Caco-2 (cell line): ENCODE measurements at regions of chr16 and their contacts with region 1.

Region 1: GRCh38 chr16:84144859-84145639 is at the starts of genes DNAAF1 and HSDL1:
- DNase-seq: peak; percentile 89 to 98
- H3K4me3 ChIP-seq: peak within 1 kb of the TSS; percentile 64
- H3K4me3 Mint-ChIP-seq: peak within 1 kb of the TSS; percentile 93
- H3K27ac Mint-ChIP-seq: peak within 1 kb of the TSS; percentile 88
- H3K4me1 ChIP-seq: no peaks in the 10 kb centered on the region
- H3K4me1 Mint-ChIP-seq: peaks cover 15% of the 10 kb centered on the region
- H3K27me3 ChIP-seq: no peaks in the 10 kb centered on the region
- H3K27me3 Mint-ChIP-seq: peaks cover 10% of the 10 kb centered on the region
- CTCF ChIP-seq: peak; percentile 58 to 70
- total RNA-seq, gene DNAAF1: 0.07 TPM in 1 of 2 replicates, not detected in the other
- total RNA-seq, gene HSDL1: 21.0 and 23.7 TPM in 2 replicates

Region 2: GRCh38 chr16:84084570-84085270 is 60.3 kb before region 1 on chr16:
- CTCF ChIA-PET with region 1: interaction called, 5 read pairs
- POLR2A ChIA-PET with region 1: no interaction called
- intact Hi-C with region 1: loop called (anchors 1 kb)
- DNase-seq: peak; percentile 81 to 83
- H3K4me3 ChIP-seq: no peak overlapping the region
- H3K4me3 Mint-ChIP-seq: no peak overlapping the region
- H3K27ac Mint-ChIP-seq: no peak overlapping the region
- H3K4me1 ChIP-seq: no peaks in the 10 kb centered on the region
- H3K4me1 Mint-ChIP-seq: no peaks in the 10 kb centered on the region
- H3K27me3 ChIP-seq: no peaks in the 10 kb centered on the region
- H3K27me3 Mint-ChIP-seq: no peaks in the 10 kb centered on the region
- CTCF ChIP-seq: peak; percentile 88 to 92

Region 3: GRCh38 chr16:84096115-84097012 is 48.7 kb before region 1 on chr16:
- CTCF ChIA-PET with region 1: no interaction called
- POLR2A ChIA-PET with region 1: no interaction called
- intact Hi-C with region 1: loop called (anchors 1 kb)
- DNase-seq: peak; percentile 74 to 79
- H3K4me3 ChIP-seq: no peak overlapping the region
- H3K4me3 Mint-ChIP-seq: no peak overlapping the region
- H3K27ac Mint-ChIP-seq: peak overlapping the region; percentile 65
- H3K4me1 ChIP-seq: peaks cover 19% of the 10 kb centered on the region
- H3K4me1 Mint-ChIP-seq: peaks cover 6% of the 10 kb centered on the region
- H3K27me3 ChIP-seq: no peaks in the 10 kb centered on the region
- H3K27me3 Mint-ChIP-seq: no peaks in the 10 kb centered on the region
- CTCF ChIP-seq: no peak

Region 4: DNA sequence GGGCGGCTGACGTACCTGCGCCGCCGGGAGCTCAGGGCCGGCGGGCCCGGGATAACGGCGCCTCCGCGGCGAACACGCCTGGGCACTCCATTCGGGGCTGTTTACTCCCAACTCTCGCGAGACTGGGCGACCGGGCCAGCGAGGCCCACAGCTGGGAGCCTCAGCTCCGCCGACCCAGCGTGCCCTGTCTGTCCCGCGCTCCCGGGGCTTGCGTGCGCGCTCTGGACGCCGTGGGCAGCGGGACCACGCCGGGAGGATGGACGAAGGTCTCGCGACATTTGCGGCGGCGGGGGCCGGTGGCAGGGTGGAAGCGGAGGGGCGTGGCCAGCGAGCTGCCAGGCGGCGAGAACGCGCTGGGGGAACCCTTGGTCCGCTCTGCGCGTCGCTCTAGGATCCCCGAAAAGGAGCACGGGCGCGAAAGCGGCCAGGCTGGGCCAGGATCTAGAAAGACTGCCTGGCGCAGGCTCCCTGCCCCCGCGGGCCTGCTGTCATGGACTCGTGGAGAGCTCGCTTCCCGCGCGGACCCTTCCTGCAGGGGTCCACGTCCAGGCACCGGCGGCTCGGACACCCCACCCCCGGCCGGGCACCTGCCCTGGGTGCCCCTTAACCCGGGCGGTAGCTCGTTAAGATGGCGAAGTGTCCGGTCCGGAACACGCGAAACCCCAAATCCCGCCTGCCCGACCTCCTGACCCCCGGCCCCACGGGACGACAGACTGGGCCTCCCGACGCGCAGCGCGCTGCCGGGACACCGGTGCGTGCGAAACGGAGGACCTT is 28.1 kb before region 1 on chr16 and contains the start of gene MBTPS1:
- CTCF ChIA-PET with region 1: interaction called, 4 read pairs
- POLR2A ChIA-PET with region 1: interaction called, 4 read pairs
- intact Hi-C with region 1: loop called (anchors 1 kb)
- DNase-seq: peak; percentile 99 to 100
- H3K4me3 ChIP-seq: peak within 1 kb of the TSS; percentile 62
- H3K4me3 Mint-ChIP-seq: peak within 1 kb of the TSS; percentile 92
- H3K27ac Mint-ChIP-seq: peak within 1 kb of the TSS; percentile 96
- H3K4me1 ChIP-seq: no peaks in the 10 kb centered on the region
- H3K4me1 Mint-ChIP-seq: no peaks in the 10 kb centered on the region
- H3K27me3 ChIP-seq: no peaks in the 10 kb centered on the region
- H3K27me3 Mint-ChIP-seq: no peaks in the 10 kb centered on the region
- CTCF ChIP-seq: no peak
- total RNA-seq, gene MBTPS1: 93.2 and 96.4 TPM in 2 replicates

Region 5: DNA sequence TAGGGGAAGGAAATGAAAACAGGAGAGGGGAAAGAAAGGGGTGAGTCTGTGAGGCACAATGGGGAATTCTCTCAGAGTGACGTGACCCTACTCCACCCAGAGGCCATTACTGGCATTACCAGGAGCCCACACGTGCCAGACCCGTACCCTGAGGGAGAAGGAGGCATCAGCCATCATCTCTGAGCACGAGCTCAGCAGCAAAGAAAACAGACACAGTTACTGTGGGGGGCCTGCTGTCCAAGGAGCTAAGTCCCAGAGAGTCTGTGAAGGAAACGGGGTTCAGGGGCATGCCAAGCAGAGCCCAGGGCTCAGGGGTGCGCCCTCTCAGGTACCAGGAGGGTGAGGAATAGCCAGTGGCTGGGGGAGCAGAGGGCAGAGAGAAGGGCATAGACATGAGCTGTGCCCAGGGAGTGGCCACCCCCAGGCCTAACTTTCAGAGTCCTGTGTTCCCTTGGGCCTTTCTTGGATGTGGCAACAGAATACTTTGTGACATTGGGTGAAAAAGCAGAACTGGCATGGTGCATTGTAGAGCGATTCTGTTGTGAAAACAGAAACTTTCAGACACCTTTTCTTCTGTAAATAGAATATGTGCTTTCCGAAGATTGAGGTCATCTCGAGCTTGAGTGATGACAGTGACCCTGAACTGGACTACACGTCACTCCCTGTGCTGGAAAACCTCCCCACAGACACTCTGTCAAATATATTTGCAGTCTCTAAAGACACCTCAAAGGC is 30.5 kb after region 1 on chr16:
- CTCF ChIA-PET with region 1: interaction called, 3 read pairs
- POLR2A ChIA-PET with region 1: no interaction called
- intact Hi-C with region 1: loop called (anchors 1 kb)
- DNase-seq: peak; percentile 70 to 80
- H3K4me3 ChIP-seq: no peak overlapping the region
- H3K4me3 Mint-ChIP-seq: no peak overlapping the region
- H3K27ac Mint-ChIP-seq: peak overlapping the region; percentile 36
- H3K4me1 ChIP-seq: peaks cover 16% of the 10 kb centered on the region
- H3K4me1 Mint-ChIP-seq: no peaks in the 10 kb centered on the region
- H3K27me3 ChIP-seq: no peaks in the 10 kb centered on the region
- H3K27me3 Mint-ChIP-seq: no peaks in the 10 kb centered on the region
- CTCF ChIP-seq: peak; percentile 67 to 69